Gastrocnemius medialis (tissue), 4 donors: ENCODE measurements at regions of chr17 and their contacts with region 1.

Region 1: GRCh38 chr17:58417300-58418092 is at the start of gene RNF43:
- DNase-seq: peak; percentile 56 to 84
- ATAC-seq: peak; percentile 96 to 99
- H3K4me3 ChIP-seq: peak within 1 kb of the TSS; percentile 30 to 54 (median 34)
- H3K27ac ChIP-seq: peak within 1 kb of the TSS in 2 of 4 donors; percentile 6 to 29
- H3K4me1 ChIP-seq: peaks cover 0 to 10% of the 10 kb centered on the region in 2 donors
- H3K27me3 ChIP-seq: no peaks in the 10 kb centered on the region
- CTCF ChIP-seq: peak; percentile 37 to 69 (median 60)
- POLR2A ChIP-seq: no peak
- total RNA-seq, gene RNF43: 0.20 TPM in 1 of 4 donors, not detected in the others

Region 2: GRCh38 chr17:58308173-58308984 is 109.1 kb before region 1 on chr17:
- in situ Hi-C with region 1: loop called in 1 of 4 experiments (anchors 25 kb)
- intact Hi-C with region 1: loop called (anchors 5 kb)
- DNase-seq: no peak
- ATAC-seq: no peak
- H3K4me3 ChIP-seq: no peak overlapping the region
- H3K27ac ChIP-seq: no peak overlapping the region
- H3K4me1 ChIP-seq: no peaks in the 10 kb centered on the region
- H3K27me3 ChIP-seq: no peaks in the 10 kb centered on the region
- CTCF ChIP-seq: no peak
- POLR2A ChIP-seq: no peak

Region 3: DNA sequence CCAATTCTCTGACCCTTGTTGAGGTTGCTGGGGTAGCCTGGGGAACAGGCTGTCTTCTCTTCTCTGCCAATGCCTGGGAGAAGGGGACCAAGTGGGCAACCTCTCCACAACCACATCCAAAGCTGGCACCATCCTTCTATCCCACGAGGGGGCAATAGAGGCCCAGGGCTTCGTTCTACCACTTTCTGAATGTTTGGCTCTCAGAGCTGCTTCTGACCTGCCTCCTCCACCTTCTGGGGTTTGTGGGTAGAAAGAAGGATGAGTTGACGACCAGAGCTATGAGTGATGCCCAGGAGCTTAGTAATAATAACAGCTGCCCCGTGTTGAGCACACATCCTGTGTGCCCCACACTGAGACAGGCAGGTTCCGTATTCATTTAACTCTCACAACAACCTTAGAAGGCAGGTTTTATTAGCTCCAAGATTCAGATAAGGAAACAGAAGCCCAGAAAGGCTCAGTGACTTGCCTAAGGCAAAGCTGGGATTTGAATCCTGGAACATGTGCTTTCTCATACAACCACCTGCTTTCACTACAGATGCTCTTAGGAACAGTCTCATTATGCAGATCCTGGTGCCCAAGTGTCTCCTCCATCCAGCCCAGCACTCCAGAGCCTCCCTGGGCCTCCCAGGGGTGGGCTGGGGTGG is 100.0 kb before region 1 on chr17:
- in situ Hi-C with region 1: loop called in 1 of 4 experiments (anchors 25 kb)
- intact Hi-C with region 1: no loop called
- DNase-seq: no peak
- ATAC-seq: no peak
- H3K4me3 ChIP-seq: no peak overlapping the region
- H3K27ac ChIP-seq: no peak overlapping the region
- H3K4me1 ChIP-seq: no peaks in the 10 kb centered on the region
- H3K27me3 ChIP-seq: no peaks in the 10 kb centered on the region
- CTCF ChIP-seq: peak in 1 of 5 experiments; percentile 15
- POLR2A ChIP-seq: no peak

Region 4: DNA sequence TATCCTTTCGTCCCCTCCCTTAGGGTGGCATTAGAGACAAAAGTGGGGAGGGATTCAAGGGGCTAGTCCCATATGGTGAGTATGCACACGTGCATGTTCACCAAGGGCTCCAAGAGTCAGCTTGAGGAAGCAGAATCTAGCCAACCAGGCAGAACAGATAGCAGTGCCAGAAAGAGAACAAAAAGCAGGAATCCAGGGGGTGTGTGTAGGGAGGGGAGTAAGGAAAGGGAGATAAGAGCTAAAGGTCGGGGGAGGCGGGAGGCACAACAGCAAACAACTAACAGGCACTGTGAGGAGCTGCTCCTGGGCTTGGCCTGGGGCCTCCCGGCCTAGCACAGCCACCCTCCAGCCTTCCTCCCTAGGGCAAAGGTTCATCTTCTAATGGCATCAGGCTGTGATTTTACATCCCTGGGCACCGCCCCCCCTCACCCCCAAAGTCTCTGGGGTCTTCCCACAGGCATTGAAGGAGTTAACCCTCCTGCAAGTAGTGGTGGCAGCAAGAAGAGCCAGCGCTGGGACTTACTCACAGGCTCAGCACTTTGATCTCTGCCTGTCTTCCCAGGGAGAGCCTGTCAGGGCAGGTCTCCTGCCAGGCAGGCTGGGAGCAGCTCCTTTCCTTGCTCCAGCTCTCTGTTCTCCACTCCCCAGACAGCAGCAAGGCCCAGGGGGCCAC is 53.1 kb before region 1 on chr17:
- in situ Hi-C with region 1: no loop called
- intact Hi-C with region 1: no loop called
- DNase-seq: no peak
- ATAC-seq: no peak
- H3K4me3 ChIP-seq: no peak overlapping the region
- H3K27ac ChIP-seq: no peak overlapping the region
- H3K4me1 ChIP-seq: no peaks in the 10 kb centered on the region
- H3K27me3 ChIP-seq: no peaks in the 10 kb centered on the region
- CTCF ChIP-seq: no peak
- POLR2A ChIP-seq: no peak

Region 5: DNA sequence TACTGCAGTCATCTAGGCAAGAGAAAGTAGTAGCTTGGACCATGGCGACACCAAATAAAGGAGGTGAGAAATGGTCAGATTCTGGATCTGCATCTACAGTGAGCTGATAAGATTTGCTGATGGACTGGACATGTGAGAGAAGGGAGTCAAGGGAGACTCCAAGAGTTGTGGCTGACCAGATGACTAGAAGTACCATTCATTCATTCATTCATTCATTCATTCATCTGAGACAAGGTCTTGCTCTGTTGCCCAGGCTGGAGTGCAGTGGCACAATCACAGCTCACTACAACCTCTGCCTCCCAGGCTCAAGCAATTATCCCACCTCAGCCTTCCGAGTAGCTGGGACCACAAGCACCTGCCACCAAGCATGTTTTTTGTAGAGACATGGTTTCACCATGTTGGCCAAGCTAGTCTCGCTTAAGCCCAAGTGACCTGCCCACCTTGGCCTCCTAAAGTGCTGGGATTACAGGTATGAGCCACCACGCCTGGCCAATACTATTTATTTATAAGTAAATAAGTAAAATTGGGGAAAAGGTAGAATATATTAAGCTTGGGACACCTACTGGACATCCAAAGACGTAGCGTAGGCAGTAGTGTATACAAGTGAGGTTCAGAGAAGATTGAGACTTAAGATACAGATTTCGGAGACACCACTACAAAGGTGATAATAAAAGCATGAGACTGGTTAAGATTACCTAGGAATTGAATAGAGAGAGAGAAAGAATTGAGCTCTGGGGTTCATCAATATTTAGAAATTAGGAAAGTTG is 15.5 kb after region 1 on chr17:
- in situ Hi-C with region 1: no loop called
- intact Hi-C with region 1: no loop called
- DNase-seq: no peak
- ATAC-seq: no peak
- H3K4me3 ChIP-seq: no peak overlapping the region
- H3K27ac ChIP-seq: no peak overlapping the region
- H3K4me1 ChIP-seq: no peaks in the 10 kb centered on the region
- H3K27me3 ChIP-seq: no peaks in the 10 kb centered on the region
- CTCF ChIP-seq: no peak
- POLR2A ChIP-seq: no peak